ENCODE measurements at regions of chr15 and their contacts with region 1.

Region 1: DNA sequence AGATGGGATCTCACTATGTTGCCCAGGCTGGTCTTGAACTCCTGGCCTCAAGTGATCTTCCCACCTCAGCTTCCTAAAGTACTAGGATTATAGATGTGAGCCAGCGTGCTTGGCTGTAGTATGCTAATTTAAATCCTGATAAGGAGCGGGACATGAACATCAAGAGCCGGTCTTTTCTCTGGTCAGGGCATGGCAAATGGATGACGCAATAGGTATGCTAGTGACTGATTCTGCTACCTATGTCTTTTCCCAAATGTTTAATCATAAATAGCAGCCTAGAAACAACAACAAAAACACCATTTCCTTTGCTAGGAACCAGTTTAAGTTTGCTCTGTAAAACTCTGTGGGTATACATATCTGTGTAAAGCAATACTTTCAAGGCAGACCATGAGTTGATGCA is 64.7 kb downstream of the STARD9 start:
- DNase-seq: no peak
- ATAC-seq: no peak
- H3K4me3 ChIP-seq: no peak overlapping the region
- H3K27ac ChIP-seq: no peak overlapping the region
- H3K4me1 ChIP-seq: no peaks in the 10 kb centered on the region
- H3K27me3 ChIP-seq: no peaks in the 10 kb centered on the region
- CTCF ChIP-seq: no peak
- POLR2A ChIP-seq: no peak

Region 2: DNA sequence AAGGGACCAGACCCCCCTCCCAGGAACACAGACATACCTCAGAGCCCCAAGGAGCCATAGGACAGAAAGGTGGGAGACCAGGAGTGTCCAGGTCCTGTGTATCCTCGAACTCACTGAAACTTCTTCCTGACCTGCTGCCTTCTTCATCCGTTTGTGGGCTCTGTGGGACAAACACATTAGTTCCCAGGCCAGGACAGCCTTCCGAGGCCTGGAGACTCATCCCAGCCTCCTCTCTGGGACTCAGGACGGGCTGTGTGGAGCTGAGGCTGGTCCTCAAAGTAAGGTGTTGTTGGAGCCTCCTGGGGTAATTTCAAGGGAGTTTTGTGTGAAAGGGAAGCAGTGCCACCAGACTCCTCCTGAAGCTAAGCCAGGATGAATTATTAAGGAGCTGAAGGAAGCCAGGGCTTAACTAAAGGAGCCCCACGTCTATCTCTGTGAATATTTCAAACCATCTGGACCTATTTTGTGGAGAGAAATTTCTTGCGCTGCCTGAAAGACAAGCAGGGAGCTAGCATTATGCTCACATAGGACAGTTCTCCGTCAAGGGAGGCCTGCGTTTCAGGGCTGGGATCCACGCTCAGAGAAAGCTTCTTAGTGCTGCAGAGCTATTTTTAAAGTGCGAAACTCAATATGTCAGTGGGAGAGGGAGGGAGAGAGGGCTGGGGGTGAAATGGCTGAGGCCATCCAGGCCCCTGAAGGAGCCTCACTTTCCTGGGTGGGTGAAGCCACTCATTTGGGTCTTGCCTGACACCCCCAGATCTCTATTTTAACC is 589.4 kb before region 1 on chr15:
- intact Hi-C with region 1: no loop called
- DNase-seq: no peak
- ATAC-seq: peak; percentile 72 to 87 (median 80)
- H3K4me3 ChIP-seq: no peak overlapping the region
- H3K27ac ChIP-seq: peak overlapping the region in 10 of 12 donors; percentile 17 to 81 (median 68)
- H3K4me1 ChIP-seq: peaks cover 0 to 25% (median 2%) of the 10 kb centered on the region in 12 donors
- H3K27me3 ChIP-seq: no peaks in the 10 kb centered on the region
- CTCF ChIP-seq: no peak
- POLR2A ChIP-seq: no peak

Region 3: DNA sequence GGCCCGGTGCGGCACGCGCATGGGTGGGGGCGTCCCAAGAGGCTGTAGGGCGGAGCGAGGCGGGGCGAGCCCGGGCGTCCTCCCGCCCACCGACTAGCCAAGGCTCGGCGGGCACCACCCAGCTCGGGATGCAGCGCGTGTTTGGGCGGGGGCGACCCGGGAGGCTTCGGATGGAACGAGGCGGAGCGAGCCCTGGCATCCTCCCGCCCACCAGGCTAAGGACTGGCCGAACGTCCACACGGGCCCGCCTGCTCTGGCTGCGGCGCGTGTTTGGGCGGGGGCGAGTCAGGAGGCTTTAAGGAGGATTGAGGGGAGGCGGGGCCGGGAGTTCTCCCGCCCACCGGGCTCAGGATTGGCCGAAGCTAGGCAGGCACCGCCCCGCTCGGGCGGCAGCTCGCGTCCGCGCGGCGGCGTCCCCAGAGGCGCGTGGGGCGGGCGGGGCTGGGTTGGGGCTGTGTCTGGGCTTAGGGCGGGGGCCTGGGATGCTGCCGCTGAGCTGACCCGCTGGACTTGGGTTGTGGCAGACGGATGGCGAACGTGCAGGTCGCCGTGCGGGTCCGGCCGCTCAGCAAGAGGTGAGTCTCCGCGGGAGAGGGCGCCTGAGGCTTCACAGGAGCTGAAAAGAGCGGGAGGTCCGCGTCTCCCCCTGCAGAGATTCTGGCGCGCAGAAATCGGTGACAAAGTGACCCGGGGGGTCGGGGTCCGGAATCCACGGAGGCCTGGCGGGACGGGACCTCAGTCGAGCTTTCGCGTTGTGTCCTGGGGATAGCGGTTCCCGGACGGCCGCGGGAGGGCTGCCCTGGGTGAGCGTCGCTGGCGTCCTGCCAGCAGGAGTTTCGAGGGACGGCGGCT is 64.7 kb before region 1 on chr15 and contains the start of gene STARD9:
- intact Hi-C with region 1: loop called in 4 of 10 experiments (anchors 5 to 10 kb)
- DNase-seq: peak; percentile 98 to 99 (median 99)
- ATAC-seq: peak; percentile 96 to 98 (median 97)
- H3K4me3 ChIP-seq: peak within 1 kb of the TSS; percentile 63 to 98 (median 86)
- H3K27ac ChIP-seq: peak within 1 kb of the TSS; percentile 83 to 96 (median 90)
- H3K4me1 ChIP-seq: peaks cover 0 to 50% (median 26%) of the 10 kb centered on the region in 12 donors
- H3K27me3 ChIP-seq: no peaks in the 10 kb centered on the region
- CTCF ChIP-seq: peak in 2 of 12 donors; percentile 5 to 37
- POLR2A ChIP-seq: peak in 1 of 2 donors; percentile 80
- total RNA-seq, gene STARD9: 4.3 to 10.3 (median 8.0) TPM

Region 4: GRCh38 chr15:42581272-42581730 is 58.8 kb before region 1 on chr15:
- intact Hi-C with region 1: loop called in 4 of 10 experiments (anchors 5 to 10 kb)
- DNase-seq: peak; percentile 91 to 94 (median 94)
- ATAC-seq: peak; percentile 89 to 96 (median 94)
- H3K4me3 ChIP-seq: peak overlapping the region; percentile 6 to 61 (median 49)
- H3K27ac ChIP-seq: peak overlapping the region; percentile 39 to 83 (median 76)
- H3K4me1 ChIP-seq: peaks cover 9 to 85% (median 60%) of the 10 kb centered on the region in 12 donors
- H3K27me3 ChIP-seq: no peaks in the 10 kb centered on the region
- CTCF ChIP-seq: peak in 3 of 12 donors; percentile 7 to 31 (median 14)
- POLR2A ChIP-seq: no peak

Region 5: GRCh38 chr15:42595626-42596240 is 44.4 kb before region 1 on chr15:
- intact Hi-C with region 1: no loop called
- DNase-seq: peak in 4 of 5 donors; percentile 32 to 70 (median 44)
- ATAC-seq: peak in 3 of 4 donors; percentile 60 to 66 (median 66)
- H3K4me3 ChIP-seq: peak overlapping the region in 1 of 12 donors; percentile 10
- H3K27ac ChIP-seq: peak overlapping the region in 11 of 12 donors; percentile 5 to 76 (median 43)
- H3K4me1 ChIP-seq: peaks cover 0 to 60% (median 29%) of the 10 kb centered on the region in 12 donors
- H3K27me3 ChIP-seq: no peaks in the 10 kb centered on the region
- CTCF ChIP-seq: no peak
- POLR2A ChIP-seq: no peak

Region 6: DNA sequence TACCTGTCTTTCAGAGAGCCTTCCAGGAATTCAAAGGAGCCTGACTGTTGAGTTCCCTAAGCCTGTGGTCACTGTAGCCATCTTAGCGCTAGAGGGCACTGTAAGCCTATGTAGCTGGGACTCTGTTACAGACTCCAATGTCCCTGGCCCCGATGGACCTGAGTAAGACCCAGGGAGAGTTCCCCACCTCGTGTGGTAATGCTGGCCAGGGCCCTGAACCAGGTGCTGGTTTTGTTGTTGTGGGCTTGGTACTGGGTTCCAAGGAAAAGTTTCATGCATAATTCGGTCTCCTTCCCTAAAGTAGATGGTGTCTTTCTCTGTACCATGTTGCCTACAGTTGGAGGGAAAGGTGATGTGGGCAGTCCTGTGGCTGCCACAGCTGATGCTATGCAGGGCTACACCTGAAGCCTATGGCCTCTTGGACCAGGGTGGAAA is 64.4 kb after region 1 on chr15:
- intact Hi-C with region 1: no loop called
- DNase-seq: peak in 3 of 5 donors; percentile 41 to 52 (median 51)
- ATAC-seq: peak; percentile 88 to 96 (median 94)
- H3K4me3 ChIP-seq: no peak overlapping the region
- H3K27ac ChIP-seq: no peak overlapping the region
- H3K4me1 ChIP-seq: peaks cover 0 to 7% (median 0%) of the 10 kb centered on the region in 12 donors
- H3K27me3 ChIP-seq: no peaks in the 10 kb centered on the region
- CTCF ChIP-seq: peak; percentile 67 to 85 (median 74)
- POLR2A ChIP-seq: no peak

Measured in heart left ventricle (tissue), 16 donors.